Activated CD4-positive, alpha-beta memory T cell treated with anti-CD3 and anti-CD28 coated beads for 36 hours (primary cell): ENCODE measurements at regions of chrX and their contacts with region 1.

Region 1: DNA sequence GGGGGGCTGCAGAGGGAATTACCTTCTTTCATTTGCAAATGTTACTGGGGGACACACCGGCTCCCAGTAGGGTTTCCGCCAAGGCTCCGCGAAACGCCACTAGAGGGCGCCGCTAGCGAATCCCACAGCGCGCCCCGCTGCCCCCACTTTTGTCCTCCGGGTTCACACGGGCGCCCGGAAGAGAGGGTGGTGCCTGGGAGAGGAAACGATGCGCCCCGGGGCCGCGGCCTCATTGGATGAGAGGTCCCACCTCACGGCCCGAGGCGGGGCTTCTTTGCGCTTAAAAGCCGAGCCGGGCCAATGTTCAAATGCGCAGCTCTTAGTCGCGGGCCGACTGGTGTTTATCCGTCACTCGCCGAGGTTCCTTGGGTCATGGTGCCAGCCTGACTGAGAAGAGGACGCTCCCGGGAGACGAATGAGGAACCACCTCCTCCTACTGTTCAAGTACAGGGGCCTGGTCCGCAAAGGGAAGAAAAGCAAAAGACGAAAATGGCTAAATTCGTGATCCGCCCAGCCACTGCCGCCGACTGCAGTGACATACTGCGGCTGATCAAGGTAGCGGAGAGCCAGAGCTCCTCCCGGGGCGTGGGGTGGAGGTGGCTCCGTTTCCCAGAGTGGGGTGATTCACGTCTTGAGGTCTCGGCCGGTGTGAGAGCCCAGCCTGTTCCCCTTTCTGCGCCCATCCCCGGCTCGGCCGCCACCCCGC is at the start of gene SAT1:
- DNase-seq: peak; percentile 95
- H3K4me3 Mint-ChIP-seq: peak within 1 kb of the TSS; percentile 94
- H3K27ac Mint-ChIP-seq: peak within 1 kb of the TSS; percentile 96
- H3K4me1 Mint-ChIP-seq: peaks cover 28% of the 10 kb centered on the region
- H3K27me3 Mint-ChIP-seq: no peaks in the 10 kb centered on the region
- total RNA-seq, gene SAT1: 205 to 209 TPM

Region 2: GRCh38 chrX:23694606-23695005 is 88.4 kb before region 1 on chrX:
- CTCF ChIA-PET with region 1: no interaction called
- POLR2A ChIA-PET with region 1: no interaction called
- intact Hi-C with region 1: loop called (anchors 2 kb)
- DNase-seq: peak; percentile 46
- H3K4me3 Mint-ChIP-seq: no peak overlapping the region
- H3K27ac Mint-ChIP-seq: no peak overlapping the region
- H3K4me1 Mint-ChIP-seq: no peaks in the 10 kb centered on the region
- H3K27me3 Mint-ChIP-seq: no peaks in the 10 kb centered on the region

Region 3: GRCh38 chrX:23742697-23743622 is 40.1 kb before region 1 on chrX and contains the start of gene ACOT9:
- CTCF ChIA-PET with region 1: interaction called, 6 read pairs
- POLR2A ChIA-PET with region 1: interaction called, 7 read pairs
- intact Hi-C with region 1: loop called (anchors 1 kb)
- DNase-seq: peak; percentile 87
- H3K4me3 Mint-ChIP-seq: peak within 1 kb of the TSS; percentile 86
- H3K27ac Mint-ChIP-seq: peak within 1 kb of the TSS; percentile 86
- H3K4me1 Mint-ChIP-seq: peaks cover 32% of the 10 kb centered on the region
- H3K27me3 Mint-ChIP-seq: no peaks in the 10 kb centered on the region
- total RNA-seq, gene ACOT9: 50.2 to 52.1 TPM

Region 4: GRCh38 chrX:23822397-23822796 is 39.4 kb after region 1 on chrX:
- CTCF ChIA-PET with region 1: no interaction called
- POLR2A ChIA-PET with region 1: no interaction called
- intact Hi-C with region 1: no loop called
- DNase-seq: no peak
- H3K4me3 Mint-ChIP-seq: no peak overlapping the region
- H3K27ac Mint-ChIP-seq: no peak overlapping the region
- H3K4me1 Mint-ChIP-seq: no peaks in the 10 kb centered on the region
- H3K27me3 Mint-ChIP-seq: no peaks in the 10 kb centered on the region

Region 5: DNA sequence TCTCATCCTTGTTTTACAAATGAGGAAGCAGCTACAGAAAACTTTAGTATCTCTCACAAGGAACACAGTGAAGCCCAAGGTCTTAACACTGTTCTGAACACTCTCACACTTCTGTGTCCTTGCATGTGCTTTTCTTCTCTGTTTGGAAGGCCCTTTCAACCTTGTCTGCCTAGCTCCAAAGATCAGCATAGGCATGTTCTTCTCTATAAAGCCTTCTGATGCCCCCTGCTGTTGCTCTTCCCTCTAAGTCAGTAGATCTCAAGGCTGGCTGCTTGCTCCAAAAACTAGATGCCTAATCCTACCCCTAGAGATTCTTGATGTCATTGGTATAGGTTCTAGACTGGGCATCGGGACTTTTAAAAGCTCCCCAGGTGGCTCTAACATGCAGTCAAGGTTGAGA is 118.8 kb after region 1 on chrX:
- CTCF ChIA-PET with region 1: interaction called, 49 read pairs
- POLR2A ChIA-PET with region 1: interaction called, 8 read pairs
- intact Hi-C with region 1: loop called (anchors 1 kb)
- DNase-seq: peak; percentile 46
- H3K4me3 Mint-ChIP-seq: no peak overlapping the region
- H3K27ac Mint-ChIP-seq: no peak overlapping the region
- H3K4me1 Mint-ChIP-seq: peaks cover 15% of the 10 kb centered on the region
- H3K27me3 Mint-ChIP-seq: no peaks in the 10 kb centered on the region

Region 6: DNA sequence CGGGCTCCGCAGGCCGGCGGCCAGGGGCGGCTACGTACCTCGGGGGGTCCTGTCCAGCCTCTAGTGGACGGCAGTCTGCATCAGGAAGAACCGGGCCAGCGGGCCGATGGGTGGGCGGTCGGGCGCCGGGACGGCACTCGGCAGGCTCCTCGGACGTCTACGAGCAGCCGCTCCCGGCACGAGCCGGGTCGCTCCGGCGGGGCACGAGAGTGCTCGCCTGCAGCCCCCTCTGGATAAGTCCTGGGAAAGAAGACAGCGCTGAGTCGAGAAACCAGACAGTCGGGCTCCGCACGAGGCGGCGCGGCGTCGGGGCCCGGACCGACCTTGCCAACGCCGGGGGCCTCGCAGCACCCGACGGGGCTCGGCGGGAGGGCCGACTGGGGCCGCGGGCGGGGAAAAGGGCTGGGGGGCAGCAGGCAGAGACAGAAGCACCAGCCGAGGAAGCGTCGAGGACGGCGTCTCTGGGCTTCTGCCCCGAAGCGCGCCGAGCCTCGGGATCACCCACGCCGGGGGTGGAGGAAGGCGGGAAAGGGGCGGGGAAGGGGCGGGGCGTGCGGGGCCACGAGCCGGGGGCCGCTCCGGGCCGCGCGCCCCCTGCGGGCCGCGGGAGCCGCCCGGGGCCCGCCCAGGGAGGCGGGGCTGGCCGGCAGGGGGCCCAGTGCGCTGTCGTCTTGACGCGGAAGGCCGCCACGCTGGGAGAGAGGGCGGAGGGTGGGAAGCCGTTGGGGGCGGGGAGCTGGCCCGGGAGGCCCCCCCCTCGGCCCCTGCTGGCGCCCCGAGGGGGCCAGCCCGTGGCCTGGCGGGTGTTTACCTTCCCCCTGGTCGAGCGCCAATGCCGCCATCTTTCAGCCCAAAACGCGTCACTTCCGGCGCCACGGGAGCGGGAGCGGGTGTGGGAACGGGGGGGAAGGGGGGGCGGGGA is 242.1 kb after region 1 on chrX:
- CTCF ChIA-PET with region 1: interaction called, 3 read pairs
- POLR2A ChIA-PET with region 1: no interaction called
- intact Hi-C with region 1: loop called (anchors 5 kb)
- DNase-seq: peak; percentile 91
- H3K4me3 Mint-ChIP-seq: peak overlapping the region; percentile 80
- H3K27ac Mint-ChIP-seq: no peak overlapping the region
- H3K4me1 Mint-ChIP-seq: peaks cover 25% of the 10 kb centered on the region
- H3K27me3 Mint-ChIP-seq: no peaks in the 10 kb centered on the region